ENCODE measurements at regions of chr16 and their contacts with region 1.

Region 1: GRCh38 chr16:53703590-53704444 is at the starts of genes FTO and RPGRIP1L:
- DNase-seq: peak; percentile 99
- H3K4me3 Mint-ChIP-seq: peak within 1 kb of the TSS; percentile 84
- H3K27ac Mint-ChIP-seq: peak within 1 kb of the TSS; percentile 37
- H3K4me1 Mint-ChIP-seq: peaks cover 11% of the 10 kb centered on the region
- H3K27me3 Mint-ChIP-seq: no peaks in the 10 kb centered on the region
- CTCF ChIP-seq: no peak
- total RNA-seq, gene FTO: 67.2 and 68.9 TPM in 2 replicates
- total RNA-seq, gene RPGRIP1L: 16.6 and 18.9 TPM in 2 replicates

Region 2: DNA sequence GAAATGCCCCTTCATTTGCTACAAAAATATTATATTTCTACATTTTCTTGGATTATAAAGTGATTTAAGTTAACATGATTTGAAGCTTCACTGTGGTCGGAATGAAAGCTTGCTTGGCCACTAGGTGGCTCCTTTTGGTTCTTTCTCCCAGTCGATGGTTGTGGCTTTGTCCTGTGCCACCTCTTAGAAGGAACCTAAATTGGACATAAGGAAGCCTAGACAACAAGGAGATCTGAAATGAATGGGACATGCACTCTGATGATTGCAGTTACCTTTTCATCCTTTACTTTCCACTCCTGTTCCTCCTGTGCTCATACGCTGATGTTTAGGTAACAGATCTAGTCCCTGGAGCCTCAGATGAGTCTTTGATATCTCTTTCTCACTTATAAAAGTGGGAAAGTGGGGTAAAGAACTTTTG is 39.3 kb after region 1 on chr16:
- CTCF ChIA-PET with region 1: interaction called, 12 read pairs
- intact Hi-C with region 1: no loop called
- DNase-seq: peak; percentile 54
- H3K4me3 Mint-ChIP-seq: no peak overlapping the region
- H3K27ac Mint-ChIP-seq: no peak overlapping the region
- H3K4me1 Mint-ChIP-seq: peaks cover 65% of the 10 kb centered on the region
- H3K27me3 Mint-ChIP-seq: no peaks in the 10 kb centered on the region
- CTCF ChIP-seq: peak; percentile 66

Measured in Calu3 (cell line).